Heart right ventricle (tissue), 16 donors: ENCODE measurements at regions of chr2 and their contacts with region 1.

Region 1: DNA sequence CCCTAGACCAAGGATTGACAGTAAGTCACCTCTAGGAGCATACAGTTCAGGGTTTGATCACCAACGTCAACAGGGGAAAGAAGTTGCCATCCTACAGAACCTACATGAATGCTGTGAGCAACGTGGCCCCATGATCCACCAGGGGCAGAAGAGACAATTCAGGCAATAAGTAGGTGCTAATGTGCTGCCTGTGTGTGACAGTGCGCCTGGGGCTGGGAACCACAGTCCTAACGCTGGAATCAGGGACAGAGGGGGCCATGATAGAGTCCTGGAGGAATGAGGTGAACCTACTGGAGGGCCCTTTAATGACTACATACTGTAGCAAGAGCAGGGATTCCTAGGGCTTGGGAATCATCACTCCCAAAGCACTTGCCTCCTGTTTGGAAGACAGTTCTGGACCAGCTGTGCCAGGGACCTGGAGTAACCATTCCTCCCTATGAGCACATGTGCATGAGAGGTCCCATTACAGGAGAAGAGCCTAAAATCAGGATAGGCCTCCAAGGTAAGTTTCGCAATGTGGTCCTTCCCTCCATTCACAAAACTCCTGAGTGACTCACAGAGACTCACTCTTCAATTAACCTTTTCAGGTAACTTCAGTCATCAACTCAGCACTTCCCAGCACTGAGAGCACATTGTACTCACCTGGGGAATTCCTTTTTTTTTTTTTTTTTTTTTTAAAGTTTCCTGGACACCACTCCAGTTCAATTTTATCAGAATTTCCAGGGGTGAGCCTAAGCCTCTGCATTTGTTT is 214.0 kb downstream of the TMEM163 start:
- DNase-seq: no peak
- ATAC-seq: no peak
- H3K4me3 ChIP-seq: no peak overlapping the region
- H3K27ac ChIP-seq: no peak overlapping the region
- H3K4me1 ChIP-seq: no peaks in the 10 kb centered on the region
- H3K27me3 ChIP-seq: no peaks in the 10 kb centered on the region
- CTCF ChIP-seq: no peak

Region 2: DNA sequence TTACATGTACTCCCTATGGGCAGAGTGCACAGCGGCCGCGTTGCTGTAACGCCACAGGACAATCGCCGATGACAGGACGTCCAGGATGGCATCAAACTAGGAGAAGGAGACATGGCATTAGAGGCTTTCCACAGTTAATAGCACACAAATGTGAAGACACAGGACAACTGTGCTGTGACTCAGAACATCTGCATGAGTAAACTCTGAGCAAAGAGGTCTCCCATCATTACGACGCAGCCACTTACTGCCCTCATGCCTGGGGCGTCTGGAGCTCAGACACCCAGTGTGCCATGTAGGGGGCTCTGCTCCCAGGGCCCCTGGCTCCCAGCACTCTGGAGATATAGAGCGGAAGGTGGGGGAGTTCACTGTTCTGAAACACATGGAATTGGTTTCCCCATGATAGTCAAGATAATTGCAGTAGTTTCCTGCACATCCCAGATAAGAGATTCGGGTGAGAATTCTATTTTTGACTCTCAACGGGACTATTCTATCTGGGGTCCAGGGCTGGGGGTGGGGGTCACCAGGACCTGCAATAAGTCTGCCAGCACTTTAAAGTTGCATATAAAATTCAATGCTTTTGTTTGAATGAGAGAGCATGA is 45.9 kb after region 1 on chr2:
- intact Hi-C with region 1: loop called in 1 of 10 experiments (anchors 5 kb)
- DNase-seq: no peak
- ATAC-seq: no peak
- H3K4me3 ChIP-seq: no peak overlapping the region
- H3K27ac ChIP-seq: no peak overlapping the region
- H3K4me1 ChIP-seq: no peaks in the 10 kb centered on the region
- H3K27me3 ChIP-seq: peaks cover 0 to 5% (median 0%) of the 10 kb centered on the region in 7 donors
- CTCF ChIP-seq: no peak

Region 3: GRCh38 chr2:134762508-134762907 is 257.7 kb after region 1 on chr2:
- intact Hi-C with region 1: no loop called
- DNase-seq: no peak
- ATAC-seq: no peak
- H3K4me3 ChIP-seq: no peak overlapping the region
- H3K27ac ChIP-seq: no peak overlapping the region
- H3K4me1 ChIP-seq: peaks cover 0 to 9% (median 0%) of the 10 kb centered on the region in 9 donors
- H3K27me3 ChIP-seq: peaks cover 0 to 11% (median 0%) of the 10 kb centered on the region in 7 donors
- CTCF ChIP-seq: no peak